Naive thymus-derived CD4-positive, alpha-beta T cell (primary cell): ENCODE measurements at regions of chr11 and their contacts with region 1.

Region 1: GRCh38 chr11:64872790-64873488 is 5.5 kb downstream of the EHD1 start:
- DNase-seq: peak in 1 of 9 donors; percentile 22
- ATAC-seq: no peak
- H3K4me3 ChIP-seq: peak overlapping the region; percentile 24
- H3K4me3 Mint-ChIP-seq: peak overlapping the region; percentile 31 to 86 (median 68)
- H3K27ac ChIP-seq: peak overlapping the region; percentile 57
- H3K27ac Mint-ChIP-seq: peak overlapping the region; percentile 3 to 94 (median 76)
- H3K4me1 ChIP-seq: peaks cover 74 to 77% of the 10 kb centered on the region in 2 donors
- H3K4me1 Mint-ChIP-seq: peaks cover 63 to 89% (median 77%) of the 10 kb centered on the region in 7 donors
- H3K27me3 ChIP-seq: no peaks in the 10 kb centered on the region
- H3K27me3 Mint-ChIP-seq: no peaks in the 10 kb centered on the region

Region 2: GRCh38 chr11:64894070-64894796 is 21.3 kb after region 1 on chr11:
- CTCF ChIA-PET with region 1: interaction called, 945 read pairs
- POLR2A ChIA-PET with region 1: interaction called, 1,324 read pairs
- intact Hi-C with region 1: loop called in 1 of 2 experiments (anchors 2 kb)
- DNase-seq: peak; percentile 75 to 93 (median 87)
- ATAC-seq: peak; percentile 89
- H3K4me3 ChIP-seq: no peak overlapping the region
- H3K4me3 Mint-ChIP-seq: peak overlapping the region in 1 of 10 donors; percentile 21
- H3K27ac ChIP-seq: no peak overlapping the region
- H3K27ac Mint-ChIP-seq: peak overlapping the region in 2 of 9 donors; percentile 45 to 75
- H3K4me1 ChIP-seq: peaks cover 0 to 6% of the 10 kb centered on the region in 2 donors
- H3K4me1 Mint-ChIP-seq: peaks cover 0 to 6% (median 0%) of the 10 kb centered on the region in 7 donors
- H3K27me3 ChIP-seq: no peaks in the 10 kb centered on the region
- H3K27me3 Mint-ChIP-seq: no peaks in the 10 kb centered on the region

Region 3: GRCh38 chr11:64907405-64907804 is 34.5 kb after region 1 on chr11:
- CTCF ChIA-PET with region 1: no interaction called
- POLR2A ChIA-PET with region 1: no interaction called
- intact Hi-C with region 1: no loop called
- DNase-seq: no peak
- ATAC-seq: no peak
- H3K4me3 ChIP-seq: no peak overlapping the region
- H3K4me3 Mint-ChIP-seq: no peak overlapping the region
- H3K27ac ChIP-seq: no peak overlapping the region
- H3K27ac Mint-ChIP-seq: no peak overlapping the region
- H3K4me1 ChIP-seq: no peaks in the 10 kb centered on the region
- H3K4me1 Mint-ChIP-seq: no peaks in the 10 kb centered on the region
- H3K27me3 ChIP-seq: no peaks in the 10 kb centered on the region
- H3K27me3 Mint-ChIP-seq: no peaks in the 10 kb centered on the region

Region 4: DNA sequence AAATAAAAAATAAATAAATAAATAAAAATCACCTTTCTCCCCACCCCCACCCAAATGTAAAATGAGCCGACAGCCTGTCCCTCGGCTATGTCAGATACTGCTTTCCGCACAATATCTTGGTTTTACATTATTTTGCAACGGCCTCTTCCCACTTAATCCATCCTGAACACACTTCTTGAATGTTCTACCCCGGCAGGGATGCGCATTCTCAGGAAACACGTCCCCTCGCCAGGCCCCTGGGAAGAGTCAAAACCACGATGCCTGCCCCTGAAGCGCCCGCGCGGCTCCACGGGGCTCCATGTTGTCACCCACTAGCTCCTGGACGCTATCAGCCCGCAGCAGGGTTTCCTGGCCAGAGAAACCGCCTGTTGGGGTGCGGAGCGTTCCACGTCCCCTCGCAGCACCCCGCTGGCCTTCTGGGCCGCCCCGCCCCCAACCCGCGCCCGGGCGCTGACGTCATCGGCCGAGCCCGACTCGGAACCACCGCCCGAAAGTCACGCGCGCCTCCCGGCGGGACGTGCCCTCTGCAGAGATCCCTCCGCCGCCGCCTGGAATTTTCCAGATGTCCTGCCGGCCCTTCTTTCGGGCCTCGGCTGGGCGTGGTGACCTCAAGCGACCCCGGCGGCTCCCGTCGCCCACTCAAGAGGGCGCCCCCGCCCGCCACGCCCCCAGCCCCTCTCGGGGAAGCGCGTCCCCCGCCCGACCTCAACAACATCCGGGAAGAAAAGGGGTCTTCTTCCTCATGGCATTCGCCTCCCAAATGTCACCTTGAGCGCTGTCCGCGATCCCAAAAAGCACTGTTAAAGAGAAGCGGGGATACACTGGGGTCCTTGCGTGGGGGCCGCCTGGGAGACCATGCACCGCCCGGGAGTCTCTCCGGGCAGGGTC is 549.1 kb after region 1 on chr11:
- CTCF ChIA-PET with region 1: no interaction called
- POLR2A ChIA-PET with region 1: no interaction called
- intact Hi-C with region 1: no loop called
- DNase-seq: peak; percentile 72 to 99 (median 80)
- ATAC-seq: peak; percentile 29
- H3K4me3 ChIP-seq: peak overlapping the region; percentile 74
- H3K4me3 Mint-ChIP-seq: peak overlapping the region; percentile 92 to 100 (median 97)
- H3K27ac ChIP-seq: peak overlapping the region; percentile 98
- H3K27ac Mint-ChIP-seq: peak overlapping the region; percentile 97 to 100 (median 99)
- H3K4me1 ChIP-seq: peaks cover 30 to 41% of the 10 kb centered on the region in 2 donors
- H3K4me1 Mint-ChIP-seq: peaks cover 36 to 77% (median 41%) of the 10 kb centered on the region in 7 donors
- H3K27me3 ChIP-seq: no peaks in the 10 kb centered on the region
- H3K27me3 Mint-ChIP-seq: peaks cover 0 to 32% (median 0%) of the 10 kb centered on the region in 5 donors